K562 (cell line): ENCODE measurements at regions of chr1 and their contacts with region 1.

Region 1: GRCh38 chr1:89632657-89633247 is at the start of gene LRRC8C:
- DNase-seq: peak; percentile 79 to 87 (median 80)
- ATAC-seq: peak; percentile 95
- H3K4me3 ChIP-seq: peak within 1 kb of the TSS; percentile 76
- H3K27ac ChIP-seq: peak within 1 kb of the TSS; percentile 67
- H3K4me1 ChIP-seq: peaks cover 13 to 20% of the 10 kb centered on the region in 2 experiments
- H3K27me3 ChIP-seq: no peaks in the 10 kb centered on the region
- CTCF ChIP-seq: peak in 2 of 3 experiments; percentile 64 to 72; a peak in 4 of 6 replicates
- EP300 ChIP-seq: no peak
- POLR2A ChIP-seq: peak; percentile 47; the same call in 1 of the 2 replicates
- RAD21 ChIP-seq: peak; percentile 59 to 86; a peak in 3 of 4 replicates
- polyA plus RNA-seq, gene LRRC8C: 1.00 to 1.3 TPM

Region 2: GRCh38 chr1:89649783-89650182 is 17.0 kb after region 1 on chr1:
- CTCF ChIA-PET with region 1: no interaction called
- POLR2A ChIA-PET with region 1: interaction called, 4 read pairs
- in situ Hi-C with region 1: no loop called
- intact Hi-C with region 1: loop called (anchors 2 kb)
- DNase-seq: no peak
- ATAC-seq: no peak
- H3K4me3 ChIP-seq: no peak overlapping the region
- H3K27ac ChIP-seq: no peak overlapping the region
- H3K4me1 ChIP-seq: peaks cover 0 to 6% of the 10 kb centered on the region in 2 experiments; a peak in 2 of 5 replicates
- H3K27me3 ChIP-seq: no peaks in the 10 kb centered on the region
- CTCF ChIP-seq: no peak
- EP300 ChIP-seq: no peak
- POLR2A ChIP-seq: no peak
- RAD21 ChIP-seq: no peak

Region 3: GRCh38 chr1:89706700-89707012 is 73.9 kb after region 1 on chr1:
- CTCF ChIA-PET with region 1: no interaction called
- POLR2A ChIA-PET with region 1: no interaction called
- in situ Hi-C with region 1: loop called (anchors 5 kb)
- intact Hi-C with region 1: loop called (anchors 2 kb)
- DNase-seq: no peak
- ATAC-seq: no peak
- H3K4me3 ChIP-seq: no peak overlapping the region
- H3K27ac ChIP-seq: no peak overlapping the region
- H3K4me1 ChIP-seq: peaks cover 0 to 38% of the 10 kb centered on the region in 2 experiments
- H3K27me3 ChIP-seq: no peaks in the 10 kb centered on the region
- CTCF ChIP-seq: no peak
- EP300 ChIP-seq: no peak
- POLR2A ChIP-seq: no peak
- RAD21 ChIP-seq: no peak

Region 4: GRCh38 chr1:89762779-89763648 is 130.3 kb after region 1 on chr1:
- CTCF ChIA-PET with region 1: interaction called, 29 read pairs
- POLR2A ChIA-PET with region 1: interaction called, 8 read pairs
- in situ Hi-C with region 1: loop called (anchors 5 kb)
- intact Hi-C with region 1: loop called (anchors 1 kb)
- DNase-seq: peak; percentile 88 to 92 (median 90)
- ATAC-seq: peak; percentile 100
- H3K4me3 ChIP-seq: peak overlapping the region; percentile 36
- H3K27ac ChIP-seq: peak overlapping the region; percentile 35; the same call in 1 of the 3 replicates
- H3K4me1 ChIP-seq: peaks cover 15 to 17% of the 10 kb centered on the region in 2 experiments
- H3K27me3 ChIP-seq: no peaks in the 10 kb centered on the region; a peak in 1 of 5 replicates
- CTCF ChIP-seq: peak; percentile 96 to 98 (median 97)
- EP300 ChIP-seq: peak; percentile 46; the same call in 1 of the 2 replicates
- POLR2A ChIP-seq: no peak
- RAD21 ChIP-seq: peak; percentile 98 to 99

Region 5: GRCh38 chr1:89987170-89987819 is 354.5 kb after region 1 on chr1:
- CTCF ChIA-PET with region 1: no interaction called
- POLR2A ChIA-PET with region 1: no interaction called
- in situ Hi-C with region 1: loop called (anchors 5 kb)
- intact Hi-C with region 1: loop called (anchors 5 kb)
- DNase-seq: peak; percentile 46 to 82 (median 62)
- ATAC-seq: peak; percentile 91
- H3K4me3 ChIP-seq: no peak overlapping the region
- H3K27ac ChIP-seq: no peak overlapping the region
- H3K4me1 ChIP-seq: peaks cover 2 to 14% of the 10 kb centered on the region in 2 experiments; a peak in 4 of 5 replicates
- H3K27me3 ChIP-seq: no peaks in the 10 kb centered on the region
- CTCF ChIP-seq: peak; percentile 77 to 91 (median 88)
- EP300 ChIP-seq: 0 out of 2 replicates have a peak, but pooled peaks have one; percentile 17
- POLR2A ChIP-seq: no peak
- RAD21 ChIP-seq: peak; percentile 93 to 98

Region 6: DNA sequence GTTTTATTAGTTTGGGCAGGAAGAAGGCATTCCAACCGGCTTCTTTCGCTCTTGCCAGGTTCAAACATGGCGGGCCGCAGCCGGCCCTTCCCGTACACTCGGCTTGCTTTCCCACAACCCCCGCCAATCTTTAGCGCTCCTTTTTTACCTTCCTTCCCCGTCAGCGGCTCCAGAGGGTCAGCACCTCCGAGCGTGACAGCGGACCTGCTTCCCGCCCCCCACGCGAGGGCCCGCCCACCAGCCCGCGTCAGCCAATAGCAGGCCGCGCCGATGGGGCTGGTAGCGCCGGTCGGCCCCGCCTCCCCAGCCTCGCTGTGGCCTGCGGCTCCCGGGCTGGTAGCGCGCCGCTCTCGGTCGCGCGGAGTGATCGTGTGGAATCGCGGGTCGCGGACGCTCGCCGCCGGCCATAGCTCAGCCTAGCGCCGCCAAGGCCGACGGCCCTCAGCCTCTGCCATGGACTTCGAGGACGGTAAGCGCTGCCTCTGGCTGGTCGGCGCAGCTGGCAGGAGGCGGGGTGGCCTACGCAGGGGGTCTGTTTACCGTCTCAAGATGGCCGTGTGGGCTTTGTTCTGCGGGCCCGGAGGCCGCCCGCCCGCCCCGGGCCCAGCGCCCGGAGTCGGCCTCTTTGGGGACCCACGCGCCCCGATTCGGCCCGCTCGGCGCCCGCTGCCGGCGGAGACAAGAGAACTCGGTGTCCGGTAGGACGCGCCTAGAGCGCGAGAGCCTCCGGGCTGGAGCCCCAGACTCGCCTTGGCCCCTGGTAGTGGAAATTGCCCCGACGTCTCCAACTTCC is 362.2 kb after region 1 on chr1 and contains the start of gene ZNF326:
- CTCF ChIA-PET with region 1: no interaction called
- POLR2A ChIA-PET with region 1: no interaction called
- in situ Hi-C with region 1: loop called (anchors 5 kb)
- intact Hi-C with region 1: no loop called
- DNase-seq: peak; percentile 97 to 99 (median 99)
- ATAC-seq: peak; percentile 97
- H3K4me3 ChIP-seq: peak within 1 kb of the TSS; percentile 83
- H3K27ac ChIP-seq: peak within 1 kb of the TSS; percentile 94
- H3K4me1 ChIP-seq: peaks cover 21 to 30% of the 10 kb centered on the region in 2 experiments
- H3K27me3 ChIP-seq: no peaks in the 10 kb centered on the region
- CTCF ChIP-seq: peak in 2 of 3 experiments; percentile 2 to 7; a peak in 1 of 6 replicates
- EP300 ChIP-seq: no peak
- POLR2A ChIP-seq: peak; percentile 97
- RAD21 ChIP-seq: no peak
- polyA plus RNA-seq, gene ZNF326: 7.3 to 7.7 TPM